IMR-90 (cell line): ENCODE measurements at regions of chr9 and their contacts with region 1.

Region 1: DNA sequence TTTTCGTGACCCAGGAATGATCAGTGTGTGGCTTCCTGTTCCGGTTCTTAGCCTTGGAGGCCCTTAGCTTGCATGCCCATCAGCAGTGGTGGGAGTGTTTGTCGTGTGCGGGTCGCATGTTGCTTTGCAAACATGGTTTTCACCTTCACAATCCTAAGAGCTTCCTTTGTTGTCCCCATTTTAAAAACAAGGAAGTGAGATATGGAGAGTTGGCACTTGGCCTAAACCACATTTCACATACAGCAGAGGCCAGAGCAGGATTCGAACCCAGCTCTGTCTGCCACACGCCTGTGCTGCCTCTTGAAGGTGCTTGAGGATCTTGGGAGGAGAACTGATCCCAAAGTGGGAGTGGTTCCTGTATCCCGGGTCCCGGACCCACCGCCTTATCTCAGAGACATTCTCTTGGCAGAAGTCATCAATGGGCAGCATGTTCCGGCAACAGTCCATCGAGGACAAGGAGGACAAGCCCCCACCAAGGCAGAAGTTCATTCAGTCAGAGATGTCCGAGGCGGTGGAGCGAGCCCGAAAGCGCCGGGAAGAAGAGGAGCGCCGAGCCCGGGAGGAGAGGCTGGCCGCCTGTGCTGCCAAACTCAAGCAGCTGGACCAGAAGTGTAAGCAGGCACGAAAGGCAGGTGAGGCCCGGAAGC is 38.2 kb upstream of the POMT1 start:
- DNase-seq: no peak
- ATAC-seq: no peak
- H3K4me3 ChIP-seq: no peak overlapping the region
- H3K27ac ChIP-seq: no peak overlapping the region
- H3K4me1 ChIP-seq: no peaks in the 10 kb centered on the region
- H3K27me3 ChIP-seq: no peaks in the 10 kb centered on the region
- CTCF ChIP-seq: no peak
- POLR2A ChIP-seq: no peak
- RAD21 ChIP-seq: no peak

Region 2: DNA sequence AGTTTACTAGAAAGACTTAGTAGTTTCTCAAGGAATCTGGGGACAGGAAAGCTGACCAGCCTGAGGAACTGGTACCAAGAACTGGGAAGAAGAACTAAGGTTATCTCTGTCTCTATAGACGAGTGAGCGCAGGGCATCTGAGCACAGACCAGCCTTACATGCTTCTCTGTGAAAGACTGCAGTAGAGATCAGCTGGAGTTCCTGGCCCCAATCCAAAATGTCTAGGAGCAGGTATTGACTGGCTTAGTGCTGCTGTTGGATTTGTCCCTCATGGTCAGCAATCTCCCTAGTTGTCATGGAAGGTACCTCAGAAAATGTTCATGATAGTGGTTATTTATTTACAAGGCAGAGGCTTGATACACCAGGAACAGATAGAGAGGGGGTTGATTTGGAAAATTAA is 325.8 kb before region 1 on chr9:
- CTCF ChIA-PET with region 1: no interaction called
- POLR2A ChIA-PET with region 1: no interaction called
- dilution Hi-C with region 1: no loop called
- in situ Hi-C with region 1: loop called (anchors 10 kb)
- intact Hi-C with region 1: no loop called
- DNase-seq: no peak
- ATAC-seq: no peak
- H3K4me3 ChIP-seq: no peak overlapping the region
- H3K27ac ChIP-seq: no peak overlapping the region
- H3K4me1 ChIP-seq: no peaks in the 10 kb centered on the region
- H3K27me3 ChIP-seq: no peaks in the 10 kb centered on the region
- CTCF ChIP-seq: no peak
- POLR2A ChIP-seq: no peak
- RAD21 ChIP-seq: no peak